Sigmoid colon (tissue), 7 donors: ENCODE measurements at regions of chr15 and their contacts with region 1.

Region 1: DNA sequence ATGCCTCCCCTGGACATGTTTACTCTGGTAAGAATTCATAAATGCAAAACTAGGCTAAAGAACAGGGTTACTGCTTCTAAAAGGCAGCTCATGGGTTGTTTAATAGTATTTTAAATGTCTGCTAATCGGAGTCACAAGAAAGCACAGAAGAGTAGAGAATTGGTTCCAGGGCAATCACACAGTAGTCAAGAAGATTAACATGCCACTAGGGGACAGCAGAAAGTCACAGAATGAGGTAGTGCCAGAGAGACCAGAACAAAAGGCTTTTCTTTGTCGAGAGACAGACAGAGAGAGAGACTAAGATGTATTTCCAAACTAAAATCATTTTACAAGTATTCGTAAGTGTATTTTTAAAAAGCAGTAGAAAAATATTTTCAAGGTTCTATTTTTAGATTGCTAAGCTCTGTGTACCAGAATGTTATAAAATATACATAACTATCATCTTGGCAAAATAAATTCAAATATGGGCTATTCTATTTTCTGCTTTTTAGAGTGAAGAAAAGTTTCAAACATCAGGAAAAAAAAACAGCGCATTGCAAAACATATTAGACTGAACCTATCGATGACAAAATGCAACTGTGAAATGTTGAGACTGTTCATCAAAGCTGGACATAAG is 78.3 kb upstream of the CDIN1 start:
- DNase-seq: no peak
- H3K4me3 ChIP-seq: no peak overlapping the region
- H3K27ac ChIP-seq: peak overlapping the region in 1 of 4 donors; percentile 30
- H3K4me1 ChIP-seq: peaks cover 0 to 41% (median 16%) of the 10 kb centered on the region in 4 donors
- H3K27me3 ChIP-seq: no peaks in the 10 kb centered on the region
- CTCF ChIP-seq: peak; percentile 49 to 79 (median 65)
- EP300 ChIP-seq: no peak
- POLR2A ChIP-seq: no peak

Region 2: DNA sequence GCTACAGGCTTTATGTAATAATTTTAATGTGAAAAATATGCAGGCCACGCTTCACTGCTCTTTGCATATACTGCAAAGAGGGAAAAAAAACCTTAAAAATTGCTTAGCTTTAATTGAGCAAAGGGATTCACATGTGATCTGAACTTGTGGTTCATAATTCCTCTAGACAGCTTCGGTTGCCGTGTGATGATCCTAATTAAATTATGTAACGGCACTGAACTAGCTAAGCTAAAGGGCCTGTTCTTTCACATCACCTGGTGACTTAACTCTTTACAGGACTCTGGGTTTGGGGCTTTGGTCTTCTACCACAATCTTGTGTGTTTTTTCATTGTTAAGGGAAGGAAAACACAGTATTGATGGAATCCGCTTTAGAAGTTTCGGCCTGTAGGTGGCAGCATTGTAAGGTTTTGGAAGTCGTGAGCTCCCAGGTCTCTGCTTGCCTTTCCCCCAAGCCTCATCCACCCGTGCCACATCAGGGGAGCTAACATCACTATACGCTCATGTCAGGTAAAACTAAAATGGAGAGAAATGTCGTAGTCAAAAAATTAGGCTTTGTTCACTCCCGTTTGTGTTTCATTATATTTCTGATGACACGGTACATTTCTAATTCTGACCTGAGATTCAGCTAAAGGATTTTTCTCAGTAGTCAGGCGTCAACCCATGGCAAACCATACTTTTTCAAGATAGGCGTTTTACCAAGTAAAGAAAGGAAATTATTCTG is 749.6 kb before region 1 on chr15:
- intact Hi-C with region 1: loop called (anchors 10 kb)
- DNase-seq: peak; percentile 84
- H3K4me3 ChIP-seq: no peak overlapping the region
- H3K27ac ChIP-seq: no peak overlapping the region
- H3K4me1 ChIP-seq: peaks cover 0 to 20% (median 0%) of the 10 kb centered on the region in 4 donors
- H3K27me3 ChIP-seq: no peaks in the 10 kb centered on the region
- CTCF ChIP-seq: peak; percentile 8 to 72 (median 48)
- EP300 ChIP-seq: no peak
- POLR2A ChIP-seq: no peak

Region 3: GRCh38 chr15:36810656-36811449 is 309.7 kb after region 1 on chr15:
- intact Hi-C with region 1: loop called (anchors 10 kb)
- DNase-seq: no peak
- H3K4me3 ChIP-seq: no peak overlapping the region
- H3K27ac ChIP-seq: peak overlapping the region; percentile 65 to 76 (median 72)
- H3K4me1 ChIP-seq: peaks cover 0 to 83% (median 65%) of the 10 kb centered on the region in 4 donors
- H3K27me3 ChIP-seq: no peaks in the 10 kb centered on the region
- CTCF ChIP-seq: peak in 2 of 4 experiments; percentile 37 to 44
- EP300 ChIP-seq: peak in 1 of 4 donors; percentile 54
- POLR2A ChIP-seq: no peak